CD4-positive, alpha-beta T cell (primary cell): ENCODE measurements at regions of chrX and their contacts with region 1.

Region 1: GRCh38 chrX:53422086-53422860 is at the start of gene SMC1A:
- DNase-seq: peak; percentile 85 to 99 (median 95)
- ATAC-seq: peak; percentile 87
- H3K4me3 ChIP-seq: peak within 1 kb of the TSS; percentile 93
- H3K4me3 Mint-ChIP-seq: peak within 1 kb of the TSS; percentile 99
- H3K27ac ChIP-seq: peak within 1 kb of the TSS; percentile 90 to 98
- H3K27ac Mint-ChIP-seq: peak within 1 kb of the TSS; percentile 90
- H3K4me1 ChIP-seq: peaks cover 34% of the 10 kb centered on the region
- H3K4me1 Mint-ChIP-seq: peaks cover 28% of the 10 kb centered on the region
- H3K27me3 ChIP-seq: no peaks in the 10 kb centered on the region
- H3K27me3 Mint-ChIP-seq: no peaks in the 10 kb centered on the region
- CTCF ChIP-seq: no peak
- total RNA-seq, gene SMC1A: 25.5 to 28.6 TPM

Region 2: GRCh38 chrX:53224860-53225797 is 197.1 kb before region 1 on chrX and contains the start of gene KDM5C:
- CTCF ChIA-PET with region 1: no interaction called
- POLR2A ChIA-PET with region 1: interaction called, 17 read pairs
- intact Hi-C with region 1: loop called in 1 of 2 experiments (anchors 2 kb)
- DNase-seq: peak; percentile 68 to 94 (median 88)
- ATAC-seq: peak; percentile 74
- H3K4me3 ChIP-seq: peak within 1 kb of the TSS; percentile 98
- H3K4me3 Mint-ChIP-seq: peak within 1 kb of the TSS; percentile 100
- H3K27ac ChIP-seq: peak within 1 kb of the TSS; percentile 89 to 91
- H3K27ac Mint-ChIP-seq: peak within 1 kb of the TSS; percentile 95
- H3K4me1 ChIP-seq: peaks cover 32% of the 10 kb centered on the region
- H3K4me1 Mint-ChIP-seq: peaks cover 38% of the 10 kb centered on the region
- H3K27me3 ChIP-seq: no peaks in the 10 kb centered on the region
- H3K27me3 Mint-ChIP-seq: no peaks in the 10 kb centered on the region
- CTCF ChIP-seq: no peak
- total RNA-seq, gene KDM5C: 236 to 237 TPM

Region 3: DNA sequence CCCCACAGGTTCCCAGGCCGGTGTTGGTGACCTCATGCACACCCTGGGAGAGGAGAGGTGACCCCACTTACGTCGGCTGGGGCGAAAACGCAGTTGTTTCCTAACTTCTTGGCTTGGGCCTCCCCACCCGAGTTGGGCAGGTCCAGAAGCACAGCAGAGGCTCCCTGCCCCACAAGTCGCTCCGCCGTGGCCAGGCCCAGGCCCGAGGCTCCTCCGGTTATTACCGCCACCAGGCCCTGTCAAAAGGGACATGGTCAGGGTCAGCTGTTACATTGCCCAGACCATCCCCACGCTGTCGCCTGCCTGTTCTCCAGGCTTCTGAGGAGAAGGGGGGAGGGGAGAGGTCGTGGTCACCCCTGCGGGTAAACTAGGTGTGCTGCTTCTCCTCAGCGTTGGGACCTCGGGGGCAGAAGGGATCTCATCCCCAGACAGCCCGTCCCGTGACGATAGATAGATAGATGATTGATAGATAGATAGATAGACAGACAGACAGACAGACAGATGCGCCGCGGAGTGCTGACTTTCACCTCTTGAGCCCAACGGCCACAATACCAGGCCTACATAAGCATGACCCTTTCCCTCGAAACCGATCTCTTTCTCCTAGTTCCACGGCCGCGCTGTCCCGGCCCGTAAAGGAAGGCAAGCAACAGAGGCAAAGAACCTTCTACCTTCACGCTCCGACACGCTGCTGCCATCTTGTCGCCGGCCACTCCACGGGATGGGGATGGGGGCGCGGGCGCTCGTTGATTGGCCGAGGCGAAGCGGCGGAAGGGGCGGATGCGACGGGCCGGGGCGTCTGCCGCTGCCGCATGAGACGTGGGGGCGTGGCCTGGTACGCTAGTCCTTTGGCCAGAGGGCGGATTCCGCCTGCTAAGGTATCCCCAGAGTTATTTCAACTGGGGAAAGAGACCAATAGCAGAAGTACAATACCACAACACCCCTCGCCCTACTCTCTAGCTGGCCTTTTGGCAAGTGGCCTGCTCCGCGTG is 11.7 kb after region 1 on chrX and contains the start of gene HSD17B10:
- CTCF ChIA-PET with region 1: interaction called, 19 read pairs
- POLR2A ChIA-PET with region 1: interaction called, 10 read pairs
- intact Hi-C with region 1: loop called in 1 of 2 experiments (anchors 2 kb)
- DNase-seq: peak; percentile 67 to 92 (median 80)
- ATAC-seq: peak; percentile 98
- H3K4me3 ChIP-seq: peak within 1 kb of the TSS; percentile 63
- H3K4me3 Mint-ChIP-seq: peak within 1 kb of the TSS; percentile 99
- H3K27ac ChIP-seq: peak within 1 kb of the TSS; percentile 34 to 39
- H3K27ac Mint-ChIP-seq: peak within 1 kb of the TSS; percentile 93
- H3K4me1 ChIP-seq: peaks cover 18% of the 10 kb centered on the region
- H3K4me1 Mint-ChIP-seq: peaks cover 16% of the 10 kb centered on the region
- H3K27me3 ChIP-seq: no peaks in the 10 kb centered on the region
- H3K27me3 Mint-ChIP-seq: peaks cover 3% of the 10 kb centered on the region
- CTCF ChIP-seq: no peak
- total RNA-seq, gene HSD17B10: 27.0 to 28.6 TPM

Region 4: GRCh38 chrX:53458082-53458481 is 35.8 kb after region 1 on chrX:
- CTCF ChIA-PET with region 1: no interaction called
- POLR2A ChIA-PET with region 1: no interaction called
- intact Hi-C with region 1: no loop called
- DNase-seq: no peak
- ATAC-seq: no peak
- H3K4me3 ChIP-seq: no peak overlapping the region
- H3K4me3 Mint-ChIP-seq: no peak overlapping the region
- H3K27ac ChIP-seq: no peak overlapping the region
- H3K27ac Mint-ChIP-seq: no peak overlapping the region
- H3K4me1 ChIP-seq: no peaks in the 10 kb centered on the region
- H3K4me1 Mint-ChIP-seq: no peaks in the 10 kb centered on the region
- H3K27me3 ChIP-seq: no peaks in the 10 kb centered on the region
- H3K27me3 Mint-ChIP-seq: peaks cover 5% of the 10 kb centered on the region
- CTCF ChIP-seq: no peak

Region 5: DNA sequence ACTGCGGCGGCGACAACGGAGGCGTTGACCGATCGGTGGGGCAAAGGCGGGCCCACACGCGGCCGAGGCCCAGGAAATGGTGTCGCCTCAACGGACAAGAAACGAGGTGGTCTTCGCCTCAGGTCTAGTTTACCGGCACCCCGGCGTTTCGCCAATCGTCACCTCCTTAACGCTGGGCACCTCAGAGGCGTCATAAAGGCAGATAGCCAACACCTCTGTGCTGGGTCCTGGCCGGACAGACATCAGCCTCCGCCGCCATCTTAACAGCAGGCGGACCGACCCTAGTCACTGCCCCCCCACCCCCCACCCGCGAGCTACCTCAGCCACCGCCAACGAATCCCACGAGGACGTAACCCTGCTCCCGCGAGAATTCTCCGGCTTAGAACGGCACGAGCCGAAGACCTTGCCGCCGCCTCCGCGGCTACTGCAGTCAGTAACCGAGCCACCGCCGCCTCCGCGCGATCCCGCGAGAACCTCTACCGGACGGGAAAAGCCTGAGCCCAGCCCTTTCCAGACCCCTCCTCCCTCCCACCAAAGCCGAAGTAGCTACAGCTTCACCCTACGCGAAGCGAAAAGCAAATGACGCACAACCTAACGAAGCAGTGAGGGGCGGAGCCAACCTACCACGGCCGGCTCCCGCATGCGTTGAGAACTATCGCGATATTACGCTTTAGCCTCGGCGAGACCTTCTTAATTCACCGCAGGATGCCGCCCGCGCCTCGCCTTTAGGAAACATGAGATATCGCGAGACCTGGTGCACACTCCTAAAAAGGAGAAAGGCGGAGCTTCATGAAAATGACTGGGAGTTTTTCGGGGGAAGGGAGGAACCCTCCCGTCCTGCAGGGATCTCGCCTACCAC is 261.5 kb after region 1 on chrX:
- CTCF ChIA-PET with region 1: no interaction called
- POLR2A ChIA-PET with region 1: interaction called, 5 read pairs
- intact Hi-C with region 1: loop called (anchors 5 to 10 kb)
- DNase-seq: peak; percentile 77 to 98 (median 86)
- ATAC-seq: peak; percentile 78
- H3K4me3 ChIP-seq: peak overlapping the region; percentile 90
- H3K4me3 Mint-ChIP-seq: peak overlapping the region; percentile 95
- H3K27ac ChIP-seq: peak overlapping the region; percentile 75 to 98
- H3K27ac Mint-ChIP-seq: peak overlapping the region; percentile 99
- H3K4me1 ChIP-seq: peaks cover 18% of the 10 kb centered on the region
- H3K4me1 Mint-ChIP-seq: peaks cover 63% of the 10 kb centered on the region
- H3K27me3 ChIP-seq: no peaks in the 10 kb centered on the region
- H3K27me3 Mint-ChIP-seq: no peaks in the 10 kb centered on the region
- CTCF ChIP-seq: no peak

Region 6: DNA sequence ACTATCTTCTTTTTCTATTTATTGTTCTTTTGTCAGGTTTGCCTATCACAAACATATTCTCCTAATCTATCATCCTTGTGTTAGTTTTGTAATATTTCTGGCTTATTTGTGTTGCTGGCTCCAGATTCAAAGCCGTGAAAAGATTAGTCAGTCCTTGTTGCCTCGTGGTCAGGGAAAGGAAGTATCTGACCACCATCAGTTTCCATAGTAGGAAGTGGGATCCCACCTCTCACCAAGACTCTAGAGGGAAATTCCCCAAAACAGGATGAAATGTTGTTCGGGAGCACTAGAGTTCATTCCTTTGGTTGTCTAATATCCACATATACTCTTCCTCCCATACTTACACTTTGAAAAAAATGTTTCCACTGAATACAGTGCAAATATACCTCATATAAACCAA is 395.3 kb after region 1 on chrX:
- CTCF ChIA-PET with region 1: no interaction called
- POLR2A ChIA-PET with region 1: no interaction called
- intact Hi-C with region 1: no loop called
- DNase-seq: no peak
- ATAC-seq: no peak
- H3K4me3 ChIP-seq: no peak overlapping the region
- H3K4me3 Mint-ChIP-seq: no peak overlapping the region
- H3K27ac ChIP-seq: no peak overlapping the region
- H3K27ac Mint-ChIP-seq: no peak overlapping the region
- H3K4me1 ChIP-seq: no peaks in the 10 kb centered on the region
- H3K4me1 Mint-ChIP-seq: no peaks in the 10 kb centered on the region
- H3K27me3 ChIP-seq: no peaks in the 10 kb centered on the region
- H3K27me3 Mint-ChIP-seq: no peaks in the 10 kb centered on the region
- CTCF ChIP-seq: no peak

Region 7: GRCh38 chrX:54076903-54077302 is 654.6 kb after region 1 on chrX:
- CTCF ChIA-PET with region 1: no interaction called
- POLR2A ChIA-PET with region 1: no interaction called
- intact Hi-C with region 1: no loop called
- DNase-seq: no peak
- ATAC-seq: no peak
- H3K4me3 ChIP-seq: no peak overlapping the region
- H3K4me3 Mint-ChIP-seq: no peak overlapping the region
- H3K27ac ChIP-seq: no peak overlapping the region
- H3K27ac Mint-ChIP-seq: no peak overlapping the region
- H3K4me1 ChIP-seq: no peaks in the 10 kb centered on the region
- H3K4me1 Mint-ChIP-seq: no peaks in the 10 kb centered on the region
- H3K27me3 ChIP-seq: no peaks in the 10 kb centered on the region
- H3K27me3 Mint-ChIP-seq: no peaks in the 10 kb centered on the region
- CTCF ChIP-seq: no peak